PC-3 (cell line): ENCODE measurements at regions of chr1 and their contacts with region 1.

Region 1: DNA sequence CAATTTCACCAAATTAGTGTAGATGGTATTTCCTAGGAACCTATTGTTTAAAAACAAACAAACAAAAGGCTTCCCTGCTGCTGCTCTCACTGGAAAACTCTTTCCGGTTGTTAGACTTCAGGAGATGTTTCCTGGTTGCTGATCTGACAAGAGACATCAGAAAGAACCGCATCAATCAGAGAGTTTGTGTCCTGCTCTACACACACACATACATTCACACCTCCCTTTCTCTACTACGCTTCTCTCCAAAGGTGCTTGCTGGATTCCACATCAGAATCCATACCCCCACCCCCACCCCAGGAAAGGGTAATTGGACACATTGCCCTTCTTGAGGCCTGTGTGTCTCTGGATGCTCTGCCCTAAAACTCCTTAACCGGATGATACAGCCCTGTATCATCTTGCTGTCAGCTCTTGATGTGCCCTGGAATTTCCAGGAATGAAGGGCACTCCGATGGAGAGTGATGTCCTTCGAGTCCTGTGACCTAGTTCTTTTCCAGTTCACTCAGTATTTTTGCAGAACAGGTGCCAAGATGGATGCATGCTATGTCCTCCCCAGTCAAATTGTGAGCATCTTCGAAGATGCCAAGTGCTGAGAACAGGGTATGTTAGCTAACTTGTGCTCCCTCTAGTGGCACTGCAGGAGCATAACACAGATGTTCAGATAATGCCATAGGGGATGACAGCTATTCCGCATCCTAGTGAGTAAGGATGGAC is 113.7 kb upstream of the SLC35F3 start:
- DNase-seq: peak; percentile 87
- ATAC-seq: peak; percentile 87
- H3K4me3 ChIP-seq: no peak overlapping the region
- H3K27ac ChIP-seq: no peak overlapping the region
- H3K4me1 ChIP-seq: peaks cover 12% of the 10 kb centered on the region
- H3K27me3 ChIP-seq: no peaks in the 10 kb centered on the region
- CTCF ChIP-seq: peak; percentile 98

Region 2: DNA sequence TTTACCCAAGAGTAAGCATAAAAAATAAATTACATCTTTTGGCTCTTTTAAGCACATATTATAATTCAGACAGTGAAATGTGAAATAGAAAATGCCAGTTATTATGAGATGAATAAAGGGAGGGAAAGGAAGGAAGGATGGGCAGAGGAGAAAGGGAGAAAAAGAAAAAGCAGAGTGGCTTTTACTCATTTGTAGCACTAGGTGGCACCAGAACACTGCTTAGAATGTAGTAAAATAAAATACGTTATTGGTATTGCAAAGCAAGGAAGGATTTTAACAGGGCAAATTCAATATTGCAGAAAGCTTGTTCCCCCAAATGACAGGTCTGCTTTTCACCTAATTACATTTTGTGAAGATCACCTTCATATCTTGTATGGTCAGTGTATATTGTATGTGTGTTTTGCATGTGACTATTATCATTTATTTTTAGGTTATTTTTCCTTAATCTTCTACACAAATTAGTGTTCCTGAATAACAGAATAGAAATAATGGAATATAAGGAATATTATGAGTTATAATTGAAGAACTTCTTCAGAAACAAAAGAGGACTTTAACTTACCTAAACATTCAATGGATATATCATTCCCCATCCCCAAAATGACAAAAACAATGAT is 486.2 kb before region 1 on chr1:
- CTCF ChIA-PET with region 1: no interaction called
- POLR2A ChIA-PET with region 1: no interaction called
- intact Hi-C with region 1: loop called (anchors 2 kb)
- DNase-seq: peak; percentile 74
- ATAC-seq: peak; percentile 71
- H3K4me3 ChIP-seq: no peak overlapping the region
- H3K27ac ChIP-seq: no peak overlapping the region
- H3K4me1 ChIP-seq: peaks cover 1% of the 10 kb centered on the region; the same call in 1 of the 2 replicates
- H3K27me3 ChIP-seq: no peaks in the 10 kb centered on the region
- CTCF ChIP-seq: peak; percentile 93

Region 3: DNA sequence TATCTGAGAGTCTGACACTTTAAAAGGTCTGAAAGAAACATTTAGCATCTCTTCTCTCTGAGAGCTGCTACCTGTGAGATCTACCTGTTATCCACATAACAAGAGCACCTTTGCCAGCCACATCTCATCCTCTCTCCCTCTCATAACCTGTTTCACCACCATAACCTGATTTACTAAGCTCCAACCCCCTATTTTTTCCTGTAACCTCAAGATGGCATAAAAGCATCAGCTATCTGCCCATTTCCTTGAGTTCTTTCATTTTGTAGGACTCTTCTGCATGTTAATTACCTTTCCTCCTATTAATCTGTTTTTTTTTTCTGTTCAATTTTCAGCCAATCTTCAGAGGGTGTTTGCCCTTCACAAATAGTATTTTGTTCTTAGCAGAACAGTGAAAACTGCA is 313.5 kb before region 1 on chr1:
- CTCF ChIA-PET with region 1: interaction called, 4 read pairs
- POLR2A ChIA-PET with region 1: no interaction called
- intact Hi-C with region 1: loop called (anchors 1 kb)
- DNase-seq: peak; percentile 41
- ATAC-seq: no peak
- H3K4me3 ChIP-seq: no peak overlapping the region
- H3K27ac ChIP-seq: no peak overlapping the region
- H3K4me1 ChIP-seq: peaks cover 18% of the 10 kb centered on the region
- H3K27me3 ChIP-seq: no peaks in the 10 kb centered on the region
- CTCF ChIP-seq: 0 out of 2 replicates have a peak, but pooled peaks have one; percentile 33

Region 4: GRCh38 chr1:233620065-233620464 is 170.8 kb before region 1 on chr1:
- CTCF ChIA-PET with region 1: no interaction called
- POLR2A ChIA-PET with region 1: no interaction called
- intact Hi-C with region 1: loop called (anchors 2 kb)
- DNase-seq: peak; percentile 37
- ATAC-seq: peak; percentile 30
- H3K4me3 ChIP-seq: no peak overlapping the region
- H3K27ac ChIP-seq: no peak overlapping the region
- H3K4me1 ChIP-seq: peaks cover 17% of the 10 kb centered on the region
- H3K27me3 ChIP-seq: no peaks in the 10 kb centered on the region
- CTCF ChIP-seq: no peak

Region 5: DNA sequence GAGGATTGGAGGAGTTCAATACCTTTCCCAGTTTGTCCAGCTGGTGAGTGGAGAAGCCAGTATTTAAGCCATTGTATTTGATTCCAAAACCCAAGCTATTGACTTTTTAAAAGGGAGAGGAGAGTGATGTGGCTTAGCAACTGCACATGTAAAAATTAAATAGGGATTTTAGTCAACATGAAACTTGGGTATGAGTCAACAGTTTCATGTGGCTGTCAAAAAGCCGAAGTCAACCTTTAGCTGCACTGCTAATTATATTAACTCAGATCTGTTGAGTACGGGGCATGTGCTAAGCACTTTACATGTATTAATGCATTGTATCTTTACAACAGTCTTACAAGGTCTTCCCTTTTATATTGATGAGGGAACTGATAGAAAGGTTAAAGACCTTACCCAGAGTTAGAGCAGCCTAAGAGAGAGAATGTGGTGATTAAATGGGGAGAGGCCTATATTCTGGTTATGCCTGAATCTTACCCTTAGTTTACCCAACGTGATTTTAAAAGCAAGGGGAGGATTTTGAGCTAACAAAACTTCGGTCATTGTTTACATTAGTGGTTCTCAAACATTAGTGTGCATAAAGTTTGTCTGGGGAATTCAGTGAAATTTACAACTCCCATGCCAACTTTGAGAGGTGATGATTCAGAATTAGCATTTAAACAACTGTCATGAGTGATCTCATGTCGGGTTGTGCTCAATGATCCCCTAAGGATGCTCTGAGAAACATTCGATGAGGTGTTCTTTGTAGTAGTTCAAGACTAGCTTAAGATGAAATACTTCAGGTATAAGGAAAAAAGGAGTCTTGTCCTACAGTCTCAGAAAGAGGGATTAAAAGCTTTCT is 106.7 kb after region 1 on chr1:
- CTCF ChIA-PET with region 1: no interaction called
- POLR2A ChIA-PET with region 1: no interaction called
- intact Hi-C with region 1: loop called (anchors 2 kb)
- DNase-seq: peak; percentile 94
- ATAC-seq: peak; percentile 93
- H3K4me3 ChIP-seq: peak overlapping the region; percentile 0; the same call in 1 of the 2 replicates
- H3K27ac ChIP-seq: peak overlapping the region; percentile 91
- H3K4me1 ChIP-seq: peaks cover 25% of the 10 kb centered on the region
- H3K27me3 ChIP-seq: no peaks in the 10 kb centered on the region
- CTCF ChIP-seq: no peak

Region 6: DNA sequence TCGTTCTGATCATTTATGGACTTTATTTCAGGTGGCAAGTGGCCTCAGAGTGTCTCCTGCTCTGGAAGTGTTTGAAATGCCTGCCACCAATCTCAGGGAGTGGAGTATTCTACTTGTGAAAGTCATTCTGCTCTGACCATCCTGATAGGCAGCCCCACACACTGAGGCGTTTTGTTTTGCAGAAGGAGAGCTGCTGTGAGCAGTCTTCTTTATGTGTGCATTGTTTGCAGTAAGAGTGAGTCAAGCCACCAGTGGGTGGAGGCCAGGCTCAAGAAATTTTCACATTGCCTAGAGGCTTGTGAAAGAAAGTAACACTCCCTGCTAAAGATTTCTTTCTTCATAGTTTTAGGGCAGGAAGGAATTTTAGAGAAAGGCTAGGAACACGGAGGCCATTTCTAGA is 318.1 kb after region 1 on chr1:
- CTCF ChIA-PET with region 1: no interaction called
- POLR2A ChIA-PET with region 1: no interaction called
- intact Hi-C with region 1: loop called (anchors 5 kb)
- DNase-seq: peak; percentile 93
- ATAC-seq: peak; percentile 93
- H3K4me3 ChIP-seq: no peak overlapping the region
- H3K27ac ChIP-seq: peak overlapping the region; percentile 86
- H3K4me1 ChIP-seq: peaks cover 26% of the 10 kb centered on the region
- H3K27me3 ChIP-seq: no peaks in the 10 kb centered on the region
- CTCF ChIP-seq: no peak

Region 7: GRCh38 chr1:234398849-234399381 is 608.1 kb after region 1 on chr1:
- CTCF ChIA-PET with region 1: no interaction called
- POLR2A ChIA-PET with region 1: no interaction called
- intact Hi-C with region 1: no loop called
- DNase-seq: peak; percentile 24
- ATAC-seq: peak; percentile 57
- H3K4me3 ChIP-seq: no peak overlapping the region
- H3K27ac ChIP-seq: 0 out of 2 replicates have a peak overlapping the region, but pooled peaks have one; percentile 13
- H3K4me1 ChIP-seq: 0 out of 2 replicates have a peak, but pooled peaks cover 7% of the 10 kb centered on the region
- H3K27me3 ChIP-seq: no peaks in the 10 kb centered on the region
- CTCF ChIP-seq: no peak